Mammary epithelial cell (primary cell): ENCODE measurements at regions of chr1 and their contacts with region 1.

Region 1: DNA sequence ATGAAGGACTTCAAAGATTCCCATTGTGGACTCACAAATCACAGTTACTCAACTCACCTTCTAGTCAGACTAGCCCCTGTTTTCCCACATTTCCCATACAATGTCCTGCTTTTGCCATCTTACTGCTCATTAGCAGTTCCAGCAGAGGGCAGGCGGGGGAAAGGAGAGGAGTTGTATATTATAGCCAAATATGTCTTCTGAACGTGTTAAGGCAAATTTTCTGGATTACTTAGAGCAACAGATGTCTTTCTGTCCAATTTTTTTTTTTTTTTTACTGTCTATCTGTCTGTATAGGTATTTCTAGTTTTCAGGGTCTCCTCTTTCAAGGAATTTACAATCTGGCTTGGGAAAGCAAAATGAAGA is 29.9 kb upstream of the DDAH1 start:
- DNase-seq: peak; percentile 70
- H3K4me3 ChIP-seq: no peak overlapping the region
- H3K27ac ChIP-seq: peak overlapping the region; percentile 67
- H3K4me1 ChIP-seq: peaks cover 24% of the 10 kb centered on the region
- H3K27me3 ChIP-seq: no peaks in the 10 kb centered on the region
- CTCF ChIP-seq: peak; percentile 81 to 84

Region 2: DNA sequence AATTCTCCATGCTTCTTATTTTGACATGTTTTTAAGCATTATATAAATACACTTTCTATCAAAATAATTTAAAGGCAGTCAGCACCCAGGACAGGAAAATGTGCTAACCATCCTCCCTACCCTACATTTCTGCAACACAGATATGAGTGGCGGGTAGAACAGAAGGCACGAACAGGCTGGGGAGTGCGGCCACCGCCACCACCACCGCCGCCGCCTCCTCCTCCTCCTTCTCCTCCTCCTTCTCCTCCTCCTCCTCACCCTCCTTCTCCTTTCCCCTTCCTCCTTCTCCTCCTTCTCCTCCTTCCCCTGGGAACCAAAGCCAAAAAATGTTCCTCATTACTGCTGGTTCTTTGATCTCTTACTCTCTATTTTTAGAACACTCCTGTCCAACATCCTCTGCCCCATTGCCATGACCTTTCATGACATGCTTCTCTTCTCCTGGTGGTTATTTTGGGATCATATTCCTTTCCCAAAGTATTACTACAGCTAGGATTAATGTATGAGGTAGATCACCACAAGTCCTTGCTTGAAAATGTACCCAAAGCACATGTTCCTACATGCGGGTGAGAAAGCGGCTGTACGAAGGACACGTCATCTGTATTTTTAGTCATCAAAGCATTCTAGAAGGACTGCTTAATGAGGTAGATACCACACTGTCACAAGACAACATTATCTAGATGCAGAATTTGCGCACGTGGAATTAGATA is 61.1 kb after region 1 on chr1:
- CTCF ChIA-PET with region 1: no interaction called
- dilution Hi-C with region 1: no loop called
- in situ Hi-C with region 1: no loop called
- intact Hi-C with region 1: loop called (anchors 2 kb)
- DNase-seq: peak; percentile 96
- H3K4me3 ChIP-seq: no peak overlapping the region
- H3K27ac ChIP-seq: peak overlapping the region; percentile 41
- H3K4me1 ChIP-seq: peaks cover 29% of the 10 kb centered on the region
- H3K27me3 ChIP-seq: no peaks in the 10 kb centered on the region
- CTCF ChIP-seq: no peak

Region 3: GRCh38 chr1:85628791-85629531 is 134.1 kb after region 1 on chr1:
- CTCF ChIA-PET with region 1: no interaction called
- dilution Hi-C with region 1: no loop called
- in situ Hi-C with region 1: no loop called
- intact Hi-C with region 1: loop called (anchors 1 kb)
- DNase-seq: peak; percentile 49
- H3K4me3 ChIP-seq: no peak overlapping the region
- H3K27ac ChIP-seq: no peak overlapping the region
- H3K4me1 ChIP-seq: peaks cover 13% of the 10 kb centered on the region
- H3K27me3 ChIP-seq: no peaks in the 10 kb centered on the region
- CTCF ChIP-seq: no peak

Region 4: DNA sequence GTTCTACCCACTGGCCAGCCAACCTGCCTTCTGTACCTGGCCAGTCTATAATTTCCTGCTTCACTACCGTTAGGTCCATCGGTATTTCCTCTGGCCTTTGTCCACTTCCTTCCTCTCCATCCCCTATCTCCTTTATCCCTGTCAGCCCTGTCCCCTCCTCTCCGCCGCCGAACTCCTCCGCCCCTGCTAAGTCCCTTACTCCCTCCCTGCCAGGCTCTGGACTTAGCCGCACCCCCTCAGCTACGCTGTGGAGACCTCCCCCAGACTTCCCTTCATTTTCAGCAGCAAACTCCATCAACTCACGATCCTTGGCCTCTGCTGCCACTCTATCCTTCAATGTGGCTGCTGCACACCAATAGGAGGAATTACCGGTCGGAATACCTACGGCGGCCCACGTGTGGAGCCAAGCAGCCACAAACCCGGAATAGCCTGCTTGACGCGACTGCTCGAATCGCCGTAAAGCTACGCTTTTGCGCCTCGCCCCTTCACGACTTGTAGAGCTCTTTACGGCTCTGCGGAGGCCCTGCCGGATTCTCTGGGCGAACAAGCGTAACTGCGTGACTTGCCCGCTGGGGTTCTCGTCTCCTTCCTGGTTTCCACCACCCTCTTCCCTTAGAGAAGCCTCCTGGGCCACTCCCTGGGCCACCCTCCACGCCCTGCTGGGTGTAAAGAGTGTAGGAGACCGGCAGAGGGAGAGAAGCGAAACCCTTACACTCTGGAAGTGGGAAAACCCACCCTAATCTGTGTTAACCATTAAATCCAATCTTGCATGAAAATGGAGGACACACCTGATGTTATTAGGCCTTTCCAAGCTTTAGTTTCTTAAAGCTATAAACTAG is 213.3 kb after region 1 on chr1 and contains the start of gene ZNHIT6:
- CTCF ChIA-PET with region 1: no interaction called
- dilution Hi-C with region 1: no loop called
- in situ Hi-C with region 1: no loop called
- intact Hi-C with region 1: loop called (anchors 5 kb)
- DNase-seq: peak; percentile 96
- H3K4me3 ChIP-seq: peak within 1 kb of the TSS; percentile 87 to 99 (median 88)
- H3K27ac ChIP-seq: peak within 1 kb of the TSS; percentile 53
- H3K4me1 ChIP-seq: peaks cover 12% of the 10 kb centered on the region
- H3K27me3 ChIP-seq: no peaks in the 10 kb centered on the region
- CTCF ChIP-seq: peak in 1 of 2 donors; percentile 42
- total RNA-seq, gene ZNHIT6: 8.5 to 22.5 TPM

Region 5: GRCh38 chr1:85884372-85885035 is 389.6 kb after region 1 on chr1:
- CTCF ChIA-PET with region 1: no interaction called
- dilution Hi-C with region 1: no loop called
- in situ Hi-C with region 1: loop called in 1 of 2 experiments (anchors 25 kb)
- intact Hi-C with region 1: loop called (anchors 10 kb)
- DNase-seq: no peak
- H3K4me3 ChIP-seq: no peak overlapping the region
- H3K27ac ChIP-seq: no peak overlapping the region
- H3K4me1 ChIP-seq: no peaks in the 10 kb centered on the region
- H3K27me3 ChIP-seq: no peaks in the 10 kb centered on the region
- CTCF ChIP-seq: peak; percentile 39 to 63